ENCODE measurements at regions of chr10 and their contacts with region 1.

Region 1: GRCh38 chr10:84452003-84452402 is 123.6 kb downstream of the CCSER2 start:
- DNase-seq: no peak
- ATAC-seq: no peak
- H3K4me3 ChIP-seq: no peak overlapping the region
- H3K4me3 Mint-ChIP-seq: no peak overlapping the region
- H3K27ac ChIP-seq: no peak overlapping the region
- H3K27ac Mint-ChIP-seq: peak overlapping the region in 1 of 9 donors; percentile 12
- H3K4me1 ChIP-seq: no peaks in the 10 kb centered on the region
- H3K4me1 Mint-ChIP-seq: peaks cover 2 to 26% (median 8%) of the 10 kb centered on the region in 7 donors
- H3K27me3 ChIP-seq: no peaks in the 10 kb centered on the region
- H3K27me3 Mint-ChIP-seq: no peaks in the 10 kb centered on the region

Region 2: GRCh38 chr10:84469470-84469869 is 17.5 kb after region 1 on chr10:
- CTCF ChIA-PET with region 1: no interaction called
- POLR2A ChIA-PET with region 1: no interaction called
- intact Hi-C with region 1: loop called in 1 of 2 experiments (anchors 2 kb)
- DNase-seq: no peak
- ATAC-seq: no peak
- H3K4me3 ChIP-seq: no peak overlapping the region
- H3K4me3 Mint-ChIP-seq: no peak overlapping the region
- H3K27ac ChIP-seq: no peak overlapping the region
- H3K27ac Mint-ChIP-seq: peak overlapping the region in 1 of 9 donors; percentile 63
- H3K4me1 ChIP-seq: no peaks in the 10 kb centered on the region
- H3K4me1 Mint-ChIP-seq: peaks cover 0 to 18% (median 7%) of the 10 kb centered on the region in 7 donors
- H3K27me3 ChIP-seq: no peaks in the 10 kb centered on the region
- H3K27me3 Mint-ChIP-seq: no peaks in the 10 kb centered on the region

Measured in naive thymus-derived CD4-positive, alpha-beta T cell (primary cell).